A673 (cell line): ENCODE measurements at regions of chr1 and their contacts with region 1.

Region 1: DNA sequence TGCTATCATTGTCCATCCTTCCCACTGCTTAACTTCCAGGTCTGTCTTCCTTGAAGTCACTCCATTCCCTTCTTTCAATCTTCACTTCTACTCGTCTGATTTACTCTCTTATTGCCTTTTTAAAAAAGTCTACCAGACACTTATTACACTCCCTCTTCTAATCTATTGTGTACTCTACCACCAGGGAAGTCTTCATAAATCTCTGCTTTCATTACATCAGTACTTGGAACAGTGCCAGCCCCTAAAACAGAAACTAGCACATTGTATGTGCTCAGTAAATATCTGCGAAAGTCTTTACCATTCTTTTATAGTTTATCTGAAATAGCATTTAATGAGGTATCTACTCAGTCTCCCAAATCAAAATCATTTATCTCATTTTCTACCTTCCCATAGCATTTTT is 236.4 kb downstream of the USH2A start:
- DNase-seq: peak; percentile 67
- H3K4me3 ChIP-seq: no peak overlapping the region
- H3K27ac ChIP-seq: no peak overlapping the region
- H3K4me1 ChIP-seq: peaks cover 16% of the 10 kb centered on the region
- H3K27me3 ChIP-seq: peaks cover 66% of the 10 kb centered on the region
- CTCF ChIP-seq: no peak

Region 2: GRCh38 chr1:216119602-216120001 is 67.2 kb before region 1 on chr1:
- CTCF ChIA-PET with region 1: no interaction called
- POLR2A ChIA-PET with region 1: no interaction called
- intact Hi-C with region 1: loop called (anchors 5 kb)
- DNase-seq: peak; percentile 54
- H3K4me3 ChIP-seq: no peak overlapping the region
- H3K27ac ChIP-seq: no peak overlapping the region
- H3K4me1 ChIP-seq: no peaks in the 10 kb centered on the region
- H3K27me3 ChIP-seq: peaks cover 9% of the 10 kb centered on the region
- CTCF ChIP-seq: peak; percentile 69

Region 3: DNA sequence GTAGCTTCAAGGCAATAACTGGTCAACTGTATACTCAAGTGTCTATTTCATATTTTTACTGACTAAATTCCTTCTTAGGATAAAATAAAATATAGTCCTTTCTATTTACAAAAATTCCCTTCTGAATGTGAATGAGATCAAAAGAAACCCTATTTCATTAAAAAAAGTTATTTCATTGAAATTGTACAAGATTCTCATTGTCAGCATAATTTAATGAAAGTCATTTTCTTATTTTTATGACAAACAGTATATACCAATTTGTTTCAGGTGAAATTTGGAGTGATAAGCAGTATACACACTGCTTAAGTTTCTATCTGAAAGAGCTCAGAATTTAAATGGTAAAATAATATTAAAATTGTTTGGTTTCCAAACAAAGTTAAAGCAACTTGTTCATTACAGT is 32.8 kb before region 1 on chr1:
- CTCF ChIA-PET with region 1: no interaction called
- POLR2A ChIA-PET with region 1: no interaction called
- intact Hi-C with region 1: no loop called
- DNase-seq: no peak
- H3K4me3 ChIP-seq: no peak overlapping the region
- H3K27ac ChIP-seq: no peak overlapping the region
- H3K4me1 ChIP-seq: no peaks in the 10 kb centered on the region
- H3K27me3 ChIP-seq: no peaks in the 10 kb centered on the region
- CTCF ChIP-seq: no peak